A549 (cell line): ENCODE measurements at regions of chr17 and their contacts with region 1.

Region 1: GRCh38 chr17:29039764-29040598 is 3.0 kb upstream of the PIPOX start:
- DNase-seq: no peak
- ATAC-seq: no peak
- H3K4me3 ChIP-seq: no peak overlapping the region
- H3K27ac ChIP-seq: no peak overlapping the region
- H3K4me1 ChIP-seq: no peaks in the 10 kb centered on the region
- CTCF ChIP-seq: no peak
- EP300 ChIP-seq: no peak
- POLR2A ChIP-seq: no peak
- RAD21 ChIP-seq: no peak

Region 2: GRCh38 chr17:28951991-28952975 is 87.7 kb before region 1 on chr17:
- CTCF ChIA-PET with region 1: no interaction called
- POLR2A ChIA-PET with region 1: no interaction called
- DNase-seq: peak; percentile 100
- ATAC-seq: peak; percentile 75 to 91
- H3K4me3 ChIP-seq: peak overlapping the region; percentile 56
- H3K27ac ChIP-seq: peak overlapping the region; percentile 89 to 91
- H3K4me1 ChIP-seq: peaks cover 21% of the 10 kb centered on the region
- CTCF ChIP-seq: no peak
- EP300 ChIP-seq: no peak
- POLR2A ChIP-seq: peak; percentile 16
- RAD21 ChIP-seq: no peak

Region 3: DNA sequence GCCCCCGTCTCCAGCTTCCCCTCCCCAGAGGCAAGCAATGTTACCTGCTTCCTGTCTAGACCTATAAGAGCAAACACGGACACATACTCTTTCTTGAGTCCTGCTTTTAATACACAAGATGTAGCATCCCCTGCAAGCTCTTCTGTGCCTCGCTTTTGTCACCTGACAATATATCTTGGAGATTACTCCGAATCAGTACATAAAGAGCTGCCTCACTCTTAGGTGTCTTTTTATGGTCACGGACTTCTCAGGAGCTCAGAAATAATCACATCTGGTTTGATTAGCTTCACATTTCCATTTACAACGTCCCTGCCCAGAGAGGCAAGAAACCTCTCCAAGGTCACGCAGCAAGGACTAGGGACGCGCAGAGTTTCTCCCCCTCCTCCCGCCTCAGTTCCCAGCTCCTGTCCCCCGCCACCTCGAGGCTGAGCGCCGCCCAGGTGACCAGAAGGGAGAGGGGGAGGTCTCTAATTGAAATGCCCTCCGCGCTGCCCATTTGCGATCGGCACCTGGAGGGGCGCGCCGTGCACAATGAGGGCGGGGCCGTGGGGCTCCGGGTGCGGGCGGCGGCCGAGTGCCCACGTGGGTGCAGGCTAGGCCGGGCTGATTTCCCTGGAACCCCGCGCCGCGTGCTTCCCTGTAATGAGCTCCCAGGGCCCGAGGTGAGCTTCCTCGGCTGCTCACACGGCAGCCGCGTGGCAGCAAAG is 20.4 kb before region 1 on chr17:
- CTCF ChIA-PET with region 1: interaction called, 11 read pairs
- POLR2A ChIA-PET with region 1: no interaction called
- DNase-seq: no peak
- ATAC-seq: no peak
- H3K4me3 ChIP-seq: no peak overlapping the region
- H3K27ac ChIP-seq: no peak overlapping the region
- H3K4me1 ChIP-seq: no peaks in the 10 kb centered on the region
- CTCF ChIP-seq: no peak
- EP300 ChIP-seq: no peak
- POLR2A ChIP-seq: no peak
- RAD21 ChIP-seq: no peak